Dendritic cell treated with granulocyte-macrophage colony-stimulating factor and Interleukin-4, amounts not matched to agents 40 ng/mL and 50 ng/mL, for 4 days (primary cell): ENCODE measurements at regions of chr5 and their contacts with region 1.

Region 1: GRCh38 chr5:119274767-119275130 is 81.1 kb upstream of the TNFAIP8 start:
- H3K4me3 Mint-ChIP-seq: no peak overlapping the region
- H3K27ac Mint-ChIP-seq: peak overlapping the region; percentile 87
- H3K4me1 Mint-ChIP-seq: peaks cover 74% of the 10 kb centered on the region
- H3K27me3 Mint-ChIP-seq: no peaks in the 10 kb centered on the region

Region 2: GRCh38 chr5:119031905-119032304 is 242.8 kb before region 1 on chr5:
- intact Hi-C with region 1: no loop called
- H3K4me3 Mint-ChIP-seq: no peak overlapping the region
- H3K27ac Mint-ChIP-seq: peak overlapping the region; percentile 18
- H3K4me1 Mint-ChIP-seq: peaks cover 27% of the 10 kb centered on the region
- H3K27me3 Mint-ChIP-seq: no peaks in the 10 kb centered on the region

Region 3: DNA sequence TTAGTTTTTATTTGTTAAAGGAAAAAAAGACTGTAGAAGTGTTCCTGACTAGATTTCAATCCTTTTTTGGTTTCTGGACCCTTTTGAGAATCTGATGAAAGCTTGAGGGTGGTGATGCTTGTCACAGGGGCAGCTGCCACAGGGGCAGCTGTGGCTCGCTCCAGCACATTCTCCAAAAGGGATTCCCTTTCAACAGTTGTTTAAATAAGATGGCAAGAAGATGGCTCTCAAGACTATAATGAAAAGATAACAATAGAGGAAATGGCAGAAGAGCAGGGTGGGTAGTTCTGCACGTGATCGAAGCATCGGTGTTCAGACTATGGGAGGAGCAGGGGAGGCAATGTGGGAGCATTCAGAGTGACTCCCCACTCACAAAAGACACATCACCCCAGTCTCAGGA is 34.6 kb after region 1 on chr5:
- intact Hi-C with region 1: loop called (anchors 5 kb)
- H3K4me3 Mint-ChIP-seq: no peak overlapping the region
- H3K27ac Mint-ChIP-seq: peak overlapping the region; percentile 26
- H3K4me1 Mint-ChIP-seq: peaks cover 54% of the 10 kb centered on the region
- H3K27me3 Mint-ChIP-seq: no peaks in the 10 kb centered on the region